ENCODE measurements at regions of chr16 and their contacts with region 1.

Region 1: GRCh38 chr16:4271176-4272066 is 1.4 kb downstream of the TFAP4 start:
- DNase-seq: peak; percentile 89
- ATAC-seq: peak; percentile 79
- H3K4me3 Mint-ChIP-seq: peak overlapping the region; percentile 84
- H3K27ac Mint-ChIP-seq: peak overlapping the region; percentile 87
- H3K4me1 Mint-ChIP-seq: peaks cover 11% of the 10 kb centered on the region
- H3K27me3 Mint-ChIP-seq: no peaks in the 10 kb centered on the region

Region 2: GRCh38 chr16:4194661-4195060 is 76.8 kb before region 1 on chr16:
- POLR2A ChIA-PET with region 1: no interaction called
- DNase-seq: no peak
- ATAC-seq: no peak
- H3K4me3 Mint-ChIP-seq: no peak overlapping the region
- H3K27ac Mint-ChIP-seq: no peak overlapping the region
- H3K4me1 Mint-ChIP-seq: no peaks in the 10 kb centered on the region
- H3K27me3 Mint-ChIP-seq: peaks cover 9% of the 10 kb centered on the region

Region 3: GRCh38 chr16:4253394-4254150 is 17.8 kb before region 1 on chr16:
- POLR2A ChIA-PET with region 1: interaction called, 36 read pairs
- DNase-seq: peak; percentile 98
- ATAC-seq: peak; percentile 98
- H3K4me3 Mint-ChIP-seq: peak overlapping the region; percentile 99
- H3K27ac Mint-ChIP-seq: peak overlapping the region; percentile 99
- H3K4me1 Mint-ChIP-seq: peaks cover 4% of the 10 kb centered on the region
- H3K27me3 Mint-ChIP-seq: no peaks in the 10 kb centered on the region

Region 4: DNA sequence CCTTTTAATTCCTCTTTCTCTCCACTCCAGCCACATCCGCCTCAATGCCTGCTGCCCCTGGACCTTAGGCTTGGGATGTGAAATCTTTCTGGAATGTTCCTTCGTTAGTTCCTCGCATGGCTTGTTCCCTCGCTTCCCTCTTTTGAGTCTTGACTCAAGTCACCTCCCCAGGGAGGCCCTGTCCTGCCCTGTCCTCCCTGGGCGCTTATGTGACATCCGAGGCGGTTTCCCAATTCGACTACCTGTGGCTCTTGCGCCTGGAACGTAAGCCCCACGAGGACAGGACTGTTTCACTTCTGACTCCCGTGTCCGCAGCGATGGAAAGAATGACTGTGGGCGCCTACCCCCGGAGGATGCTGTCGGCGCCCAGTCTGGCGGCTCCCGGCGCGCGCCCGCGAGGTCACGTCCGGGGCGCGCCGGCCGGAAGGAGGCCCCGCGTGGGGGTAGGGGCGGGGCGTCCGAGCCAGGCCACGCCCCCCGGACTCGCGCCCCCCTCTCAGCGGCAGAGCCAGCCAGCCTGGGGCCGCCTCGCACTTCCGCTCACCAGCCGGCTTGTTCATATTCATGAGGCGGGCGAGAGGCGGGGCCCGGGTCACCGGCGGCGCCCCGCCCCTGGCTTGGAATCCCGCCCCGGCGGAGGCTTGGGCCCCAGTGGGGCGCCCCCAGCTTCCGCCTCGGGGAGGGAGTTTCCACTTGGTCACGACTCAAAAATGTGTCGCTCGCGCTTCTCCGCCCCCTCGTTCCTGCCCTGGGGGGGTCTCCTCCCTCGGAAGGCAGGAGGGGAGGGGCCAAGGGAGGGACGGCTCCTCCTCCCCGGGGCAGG is 36.0 kb after region 1 on chr16:
- POLR2A ChIA-PET with region 1: interaction called, 32 read pairs
- DNase-seq: peak; percentile 99
- ATAC-seq: peak; percentile 93
- H3K4me3 Mint-ChIP-seq: peak overlapping the region; percentile 95
- H3K27ac Mint-ChIP-seq: peak overlapping the region; percentile 97
- H3K4me1 Mint-ChIP-seq: peaks cover 23% of the 10 kb centered on the region
- H3K27me3 Mint-ChIP-seq: peaks cover 14% of the 10 kb centered on the region

Region 5: DNA sequence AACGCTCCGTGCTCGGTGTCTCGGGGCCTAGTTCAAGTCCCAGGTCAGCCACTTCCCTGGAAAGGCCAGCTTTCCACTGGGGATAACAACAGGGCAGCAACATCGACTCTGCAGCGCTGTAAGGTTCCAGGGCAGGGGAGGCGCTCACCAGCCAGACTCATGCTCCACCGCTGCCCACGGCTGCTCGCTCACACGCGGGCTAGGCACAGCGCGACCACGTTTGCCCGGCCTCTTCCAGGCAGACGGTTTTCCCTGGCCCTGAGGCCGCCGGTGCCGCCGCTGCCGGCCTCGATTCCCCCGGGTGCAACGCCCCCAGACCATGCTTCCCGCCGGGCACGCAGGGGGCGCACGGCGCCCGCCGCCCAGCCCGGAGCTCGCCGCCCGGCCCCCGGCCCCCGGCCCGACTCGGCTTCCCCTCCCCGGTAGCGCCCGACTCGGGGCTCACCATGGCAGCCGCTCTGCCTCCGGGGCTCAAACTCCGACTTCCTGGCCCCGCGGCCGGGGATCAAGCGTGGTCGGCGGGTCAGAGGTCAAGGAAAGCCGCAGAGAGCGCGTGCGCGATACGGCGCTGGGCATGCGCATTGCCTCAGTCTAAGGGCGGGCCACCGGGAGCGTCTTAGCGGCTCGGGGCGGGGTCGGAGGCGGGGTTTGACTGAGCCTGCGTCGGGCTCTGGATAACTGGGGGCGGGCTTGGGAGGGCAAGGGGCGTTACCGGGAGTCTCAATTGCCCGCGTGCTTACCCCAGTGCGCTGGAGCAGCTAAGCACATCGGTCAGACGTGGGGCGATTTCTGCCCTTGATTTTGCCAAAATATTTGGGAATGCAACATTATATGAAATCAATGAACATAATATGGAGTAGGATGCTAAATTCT is 79.6 kb after region 1 on chr16 and contains the start of gene PAM16:
- POLR2A ChIA-PET with region 1: interaction called, 12 read pairs
- DNase-seq: peak; percentile 100
- ATAC-seq: peak; percentile 95
- H3K4me3 Mint-ChIP-seq: peak within 1 kb of the TSS; percentile 94
- H3K27ac Mint-ChIP-seq: peak within 1 kb of the TSS; percentile 91
- H3K4me1 Mint-ChIP-seq: peaks cover 9% of the 10 kb centered on the region
- H3K27me3 Mint-ChIP-seq: no peaks in the 10 kb centered on the region
- total RNA-seq, gene PAM16: 42.5 to 50.0 TPM